K562 (cell line): ENCODE measurements at regions of chr13 and their contacts with region 1.

Region 1: GRCh38 chr13:33228648-33229445 is 56.7 kb downstream of the STARD13 start:
- DNase-seq: peak; percentile 21 to 34 (median 30)
- ATAC-seq: peak; percentile 55; the same call in 1 of the 3 replicates
- H3K4me3 ChIP-seq: no peak overlapping the region
- H3K27ac ChIP-seq: no peak overlapping the region
- H3K4me1 ChIP-seq: no peaks in the 10 kb centered on the region
- H3K27me3 ChIP-seq: no peaks in the 10 kb centered on the region
- CTCF ChIP-seq: peak; percentile 53 to 74 (median 69); a peak in 5 of 6 replicates
- EP300 ChIP-seq: no peak
- POLR2A ChIP-seq: no peak
- RAD21 ChIP-seq: peak; percentile 59 to 73

Region 2: GRCh38 chr13:33723772-33724435 is 495.1 kb after region 1 on chr13:
- CTCF ChIA-PET with region 1: interaction called, 3 read pairs
- POLR2A ChIA-PET with region 1: interaction called, 5 read pairs
- in situ Hi-C with region 1: loop called (anchors 25 kb)
- intact Hi-C with region 1: loop called (anchors 5 kb)
- DNase-seq: peak; percentile 6 to 59 (median 13)
- ATAC-seq: peak; percentile 86
- H3K4me3 ChIP-seq: no peak overlapping the region
- H3K27ac ChIP-seq: no peak overlapping the region
- H3K4me1 ChIP-seq: no peaks in the 10 kb centered on the region
- H3K27me3 ChIP-seq: no peaks in the 10 kb centered on the region
- CTCF ChIP-seq: peak; percentile 44 to 63 (median 55); a peak in 5 of 6 replicates
- EP300 ChIP-seq: no peak
- POLR2A ChIP-seq: no peak
- RAD21 ChIP-seq: peak; percentile 66 to 81